Right ventricle myocardium superior (tissue), 1 donor: ENCODE measurements at regions of chr20 and their contacts with region 1.

Region 1: DNA sequence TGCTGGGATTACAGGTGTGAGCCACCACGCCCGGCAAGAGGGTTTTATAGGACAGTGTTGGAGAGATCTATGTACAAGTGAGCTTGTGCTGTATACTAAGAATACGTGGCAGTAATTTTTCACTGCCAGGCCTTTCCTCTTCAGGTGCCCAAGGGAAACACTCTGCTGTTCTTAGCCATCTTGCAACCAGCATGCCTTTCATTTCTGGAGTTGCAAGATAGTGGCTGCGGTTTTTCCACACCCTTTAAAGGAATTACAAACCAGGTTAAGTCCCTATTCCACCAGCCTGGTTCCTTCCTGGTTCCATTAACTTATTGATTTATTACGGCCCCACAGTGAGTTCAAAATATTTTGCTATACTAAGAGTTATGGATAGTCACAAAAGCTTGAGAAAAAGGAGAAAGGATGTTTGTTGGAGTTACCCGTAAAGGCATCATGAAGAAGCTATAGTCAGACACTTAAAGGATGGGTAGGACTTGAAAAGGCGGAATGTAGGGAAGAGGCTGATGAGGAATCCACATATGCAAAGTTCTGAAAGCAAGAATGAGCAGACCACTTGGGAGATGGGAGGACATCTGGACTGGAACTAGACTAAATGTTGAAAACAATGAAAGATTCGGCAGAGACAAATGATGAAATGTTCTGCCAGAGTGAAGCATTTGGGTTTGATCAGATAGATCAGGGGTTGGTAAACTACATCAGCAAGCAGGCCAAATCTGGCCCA is 61.4 kb upstream of the ASIP start:
- DNase-seq: no peak
- ATAC-seq: no peak

Region 2: GRCh38 chr20:34222208-34222607 is 42.4 kb after region 1 on chr20:
- intact Hi-C with region 1: no loop called
- DNase-seq: no peak
- ATAC-seq: no peak

Region 3: DNA sequence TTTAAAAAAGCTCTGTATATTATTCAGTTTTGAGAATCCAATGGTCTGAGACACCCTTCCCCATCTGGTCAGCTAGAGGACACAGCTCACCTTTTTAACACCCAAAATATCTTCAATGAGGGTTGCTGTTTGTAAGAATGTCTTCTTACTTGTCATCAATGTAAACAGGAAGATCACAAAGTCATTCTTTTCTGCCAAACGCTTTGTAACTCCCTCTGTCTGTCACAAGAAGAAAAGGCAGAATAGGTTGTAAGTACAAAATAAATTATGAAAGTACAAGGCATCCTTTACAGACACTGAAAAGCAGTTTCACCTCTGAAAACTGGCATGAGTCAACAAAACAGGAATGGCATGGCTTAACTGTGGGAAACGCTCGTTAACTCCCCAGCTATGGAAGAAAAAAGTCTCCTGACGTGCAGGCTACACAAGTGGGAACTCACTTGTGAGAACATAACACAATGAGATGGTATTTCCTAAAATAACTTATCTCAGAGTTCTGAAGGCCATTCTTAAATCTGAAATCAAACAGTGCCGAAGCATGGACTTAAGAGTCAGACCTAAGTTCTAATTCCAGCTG is 870.1 kb after region 1 on chr20:
- intact Hi-C with region 1: loop called (anchors 10 kb)
- DNase-seq: no peak
- ATAC-seq: peak; percentile 69